H1 (cell line): ENCODE measurements at regions of chr1 and their contacts with region 1.

Region 1: DNA sequence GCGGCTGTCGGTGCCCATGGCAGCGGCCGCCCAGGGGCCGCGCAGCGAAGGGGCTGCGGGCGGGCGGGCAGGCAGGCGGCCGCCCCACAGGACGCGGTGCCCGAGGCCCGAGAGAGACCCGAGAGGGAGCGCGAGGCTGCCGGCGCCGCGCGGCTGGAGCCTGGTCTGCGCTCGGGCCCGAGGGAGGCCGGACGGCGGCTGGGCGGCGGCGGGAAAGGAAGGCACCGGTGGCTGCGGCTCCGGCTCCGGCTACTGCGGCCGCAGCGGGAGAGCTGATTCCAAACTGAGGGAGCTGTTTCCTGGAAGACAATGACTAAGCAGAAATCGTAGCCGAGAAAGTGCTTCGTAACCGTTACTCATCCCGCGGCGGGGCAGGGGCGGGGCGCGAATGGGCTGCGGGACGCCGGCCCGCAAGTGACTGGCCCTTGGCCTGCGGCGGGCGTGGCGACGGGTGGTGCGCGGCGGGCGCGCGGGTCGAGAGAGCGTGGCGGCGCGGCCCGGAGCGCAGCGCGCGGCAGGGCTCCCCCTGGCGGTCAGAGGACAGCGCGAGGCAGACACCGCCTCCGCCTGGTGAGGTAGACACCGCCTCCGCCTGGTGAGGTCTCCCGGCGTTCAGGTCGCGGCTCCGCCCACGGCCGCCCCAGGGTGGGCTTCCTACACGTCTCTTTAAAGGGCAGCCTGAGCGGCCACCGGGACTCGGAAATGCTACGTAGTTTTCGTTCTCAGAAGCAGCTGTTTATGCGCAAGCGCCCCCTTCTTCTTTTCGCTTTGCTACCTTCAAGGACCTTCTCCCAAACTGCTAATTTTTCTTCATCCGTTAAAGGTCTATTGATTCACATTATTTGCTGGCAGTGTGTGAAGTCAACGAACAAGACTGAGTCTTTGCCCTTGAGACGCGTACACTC is at the start of gene GCLM:
- DNase-seq: peak; percentile 82 to 96
- H3K4me3 ChIP-seq: peak within 1 kb of the TSS; percentile 70 to 91 (median 81)
- H3K27ac ChIP-seq: peak within 1 kb of the TSS; percentile 42; the same call in 1 of the 2 replicates
- H3K4me1 ChIP-seq: peaks cover 0 to 3% (median 2%) of the 10 kb centered on the region in 4 experiments; a peak in 2 of 7 replicates
- H3K27me3 ChIP-seq: 0 out of 7 replicates have a peak, but pooled peaks cover 0 to 2% (median 1%) of the 10 kb centered on the region in 4 experiments
- CTCF ChIP-seq: peak; percentile 85 to 98 (median 98)
- EP300 ChIP-seq: no peak
- POLR2A ChIP-seq: peak in 1 of 2 experiments; percentile 52; a peak in 2 of 3 replicates
- RAD21 ChIP-seq: peak; percentile 28 to 58
- total RNA-seq, gene GCLM: 12.8 and 15.0 TPM in 2 replicates

Region 2: GRCh38 chr1:93878889-93879586 is 30.4 kb before region 1 on chr1 and contains the start of gene DNTTIP2:
- CTCF ChIA-PET with region 1: no interaction called
- POLR2A ChIA-PET with region 1: interaction called, 20 read pairs
- DNase-seq: peak; percentile 60 to 92
- H3K4me3 ChIP-seq: peak within 1 kb of the TSS; percentile 96 to 99 (median 97)
- H3K27ac ChIP-seq: peak within 1 kb of the TSS; percentile 86
- H3K4me1 ChIP-seq: peaks cover 0 to 2% (median 0%) of the 10 kb centered on the region in 4 experiments; a peak in 5 of 7 replicates
- H3K27me3 ChIP-seq: no peaks in the 10 kb centered on the region
- CTCF ChIP-seq: no peak
- EP300 ChIP-seq: no peak
- POLR2A ChIP-seq: peak; percentile 96 to 98
- RAD21 ChIP-seq: no peak
- total RNA-seq, gene DNTTIP2: 80.4 and 84.2 TPM in 2 replicates

Region 3: DNA sequence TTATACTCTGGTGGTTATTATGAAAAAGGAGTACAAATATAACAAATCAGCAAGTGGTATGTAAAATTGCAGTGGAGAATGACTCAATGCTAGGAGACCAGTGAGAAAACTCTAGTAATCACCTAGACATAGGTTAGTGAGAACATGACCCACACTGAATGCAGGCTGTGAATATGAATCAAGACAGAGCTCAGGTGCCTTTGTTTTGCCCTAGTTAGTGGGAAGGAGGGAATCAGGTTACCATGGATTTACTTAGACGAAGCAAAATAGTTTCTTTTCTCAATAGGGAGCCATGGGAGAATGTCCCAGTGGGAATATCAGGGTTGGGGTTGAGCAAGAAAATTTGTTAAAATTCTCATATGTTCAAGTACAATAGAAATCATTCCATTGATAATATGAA is 10.4 kb after region 1 on chr1:
- CTCF ChIA-PET with region 1: interaction called, 15 read pairs
- POLR2A ChIA-PET with region 1: interaction called, 4 read pairs
- DNase-seq: no peak
- H3K4me3 ChIP-seq: peak overlapping the region in 1 of 4 experiments; percentile 10; a peak in 1 of 8 replicates
- H3K27ac ChIP-seq: no peak overlapping the region
- H3K4me1 ChIP-seq: peaks cover 2 to 5% (median 4%) of the 10 kb centered on the region in 4 experiments; a peak in 4 of 7 replicates
- H3K27me3 ChIP-seq: no peaks in the 10 kb centered on the region
- CTCF ChIP-seq: no peak
- EP300 ChIP-seq: no peak
- POLR2A ChIP-seq: no peak
- RAD21 ChIP-seq: no peak

Region 4: DNA sequence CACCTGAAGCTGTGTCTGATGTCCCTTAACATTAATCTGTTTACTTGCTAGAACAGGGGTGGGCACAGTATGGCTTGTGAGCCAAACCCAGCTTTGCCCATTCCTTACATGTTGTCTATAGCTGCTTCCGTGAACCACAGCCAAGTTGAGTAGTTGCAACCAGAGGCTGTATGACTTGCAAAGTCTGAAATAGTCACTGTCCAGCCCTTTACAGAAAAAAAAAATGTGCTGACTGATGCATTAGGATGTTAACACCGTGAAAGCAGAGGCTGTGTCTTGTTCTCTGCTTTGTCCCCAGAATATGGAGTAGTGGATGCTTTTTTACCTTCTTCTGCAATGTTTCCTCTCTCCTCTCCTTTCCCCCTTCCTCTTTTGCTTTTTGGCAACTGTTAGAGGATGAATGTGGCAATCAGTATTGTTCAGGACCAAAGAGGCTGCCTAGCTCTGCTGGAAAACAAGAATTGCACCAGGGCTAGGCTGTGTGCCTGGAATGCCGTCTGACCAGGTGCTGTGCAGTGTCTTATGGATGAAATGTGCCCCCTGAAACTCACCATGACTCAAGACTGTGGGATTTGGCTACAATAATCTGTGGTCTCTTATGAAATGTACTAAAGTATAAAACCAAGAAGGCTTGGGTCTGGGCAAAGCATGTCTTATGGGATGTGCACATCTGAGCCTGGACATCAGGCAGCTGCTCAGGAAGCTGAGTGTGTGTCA is 79.4 kb after region 1 on chr1:
- CTCF ChIA-PET with region 1: no interaction called
- POLR2A ChIA-PET with region 1: no interaction called
- DNase-seq: no peak
- H3K4me3 ChIP-seq: no peak overlapping the region
- H3K27ac ChIP-seq: no peak overlapping the region
- H3K4me1 ChIP-seq: peaks cover 0 to 3% (median 0%) of the 10 kb centered on the region in 4 experiments; a peak in 2 of 7 replicates
- H3K27me3 ChIP-seq: no peaks in the 10 kb centered on the region
- CTCF ChIP-seq: no peak
- EP300 ChIP-seq: no peak
- POLR2A ChIP-seq: no peak
- RAD21 ChIP-seq: no peak